ENCODE measurements at regions of chr12 and their contacts with region 1.

Region 1: GRCh38 chr12:14803011-14803829 is at the starts of genes C12orf60 and WBP11:
- DNase-seq: peak; percentile 89
- H3K4me3 Mint-ChIP-seq: no peak within 1 kb of the TSS
- H3K27ac Mint-ChIP-seq: no peak within 1 kb of the TSS
- H3K4me1 Mint-ChIP-seq: peaks cover 27% of the 10 kb centered on the region
- H3K27me3 Mint-ChIP-seq: no peaks in the 10 kb centered on the region
- total RNA-seq, gene C12orf60: 2.0 to 2.4 TPM
- total RNA-seq, gene WBP11: 91.1 to 92.7 TPM

Region 2: DNA sequence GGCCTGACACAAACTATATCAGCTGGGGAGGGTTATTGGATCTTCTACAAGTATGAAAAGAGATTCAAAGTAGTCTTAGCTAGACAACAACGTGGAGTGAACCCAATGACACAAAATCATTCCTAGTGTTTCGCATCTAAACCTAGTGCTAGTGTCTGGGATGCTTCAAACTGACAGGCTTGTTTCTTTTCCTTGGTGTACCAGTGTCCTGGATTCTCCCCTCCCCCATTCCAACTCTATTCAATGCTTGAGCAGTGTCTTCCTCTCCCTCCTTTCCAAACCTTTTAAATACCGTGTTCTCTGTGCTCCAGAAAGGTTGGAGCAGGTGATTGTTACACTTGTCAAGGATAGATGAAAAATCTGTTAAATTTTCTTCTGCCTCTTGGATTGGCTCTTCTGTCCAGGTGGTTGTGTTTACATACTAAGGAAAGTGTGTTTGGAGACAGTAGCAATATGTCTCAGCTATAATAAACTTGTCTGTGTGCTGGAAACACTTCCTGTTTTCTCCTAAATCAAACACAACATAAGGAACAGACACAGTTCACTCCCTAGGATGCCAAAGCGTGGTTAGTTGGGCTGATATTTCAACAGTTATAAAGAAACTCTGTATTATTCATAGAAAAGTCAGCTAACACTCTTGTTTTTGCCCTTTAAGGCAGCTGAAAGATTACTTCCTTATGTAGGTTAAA is 92.4 kb before region 1 on chr12:
- CTCF ChIA-PET with region 1: no interaction called
- POLR2A ChIA-PET with region 1: no interaction called
- DNase-seq: no peak
- H3K4me3 Mint-ChIP-seq: no peak overlapping the region
- H3K27ac Mint-ChIP-seq: no peak overlapping the region
- H3K4me1 Mint-ChIP-seq: peaks cover under 1% of the 10 kb centered on the region
- H3K27me3 Mint-ChIP-seq: peaks cover 31% of the 10 kb centered on the region

Region 3: GRCh38 chr12:14774906-14775762 is 28.1 kb before region 1 on chr12:
- CTCF ChIA-PET with region 1: interaction called, 50 read pairs
- POLR2A ChIA-PET with region 1: interaction called, 177 read pairs
- DNase-seq: peak; percentile 41
- H3K4me3 Mint-ChIP-seq: peak overlapping the region; percentile 96
- H3K27ac Mint-ChIP-seq: peak overlapping the region; percentile 95
- H3K4me1 Mint-ChIP-seq: peaks cover 41% of the 10 kb centered on the region
- H3K27me3 Mint-ChIP-seq: peaks cover 3% of the 10 kb centered on the region

Region 4: DNA sequence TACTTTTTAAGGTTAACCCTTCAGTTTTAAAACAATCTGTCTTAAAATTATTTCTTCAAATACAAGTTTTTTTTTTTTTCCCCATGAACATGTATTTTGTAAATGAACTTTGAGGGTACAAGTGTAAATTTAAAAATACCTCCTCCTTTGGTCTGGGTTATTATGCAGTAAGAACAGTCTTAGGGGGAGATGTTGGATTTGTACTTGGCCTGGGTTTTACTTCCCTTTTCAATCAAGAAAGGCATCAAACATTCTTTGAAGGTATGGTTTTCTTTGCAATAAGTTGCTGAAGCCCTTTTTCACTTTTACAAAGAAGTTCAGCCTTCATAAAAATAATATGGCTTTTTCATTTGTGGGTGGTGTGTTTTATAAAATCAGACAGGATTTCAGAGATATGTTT is 20.5 kb before region 1 on chr12:
- CTCF ChIA-PET with region 1: interaction called, 11 read pairs
- POLR2A ChIA-PET with region 1: interaction called, 12 read pairs
- DNase-seq: no peak
- H3K4me3 Mint-ChIP-seq: no peak overlapping the region
- H3K27ac Mint-ChIP-seq: no peak overlapping the region
- H3K4me1 Mint-ChIP-seq: peaks cover 10% of the 10 kb centered on the region
- H3K27me3 Mint-ChIP-seq: peaks cover 3% of the 10 kb centered on the region